ENCODE measurements at regions of chr17 and their contacts with region 1.

Region 1: GRCh38 chr17:48084932-48085444 is 16.3 kb downstream of the CBX1 start:
- DNase-seq: no peak
- CTCF ChIP-seq: no peak

Region 2: DNA sequence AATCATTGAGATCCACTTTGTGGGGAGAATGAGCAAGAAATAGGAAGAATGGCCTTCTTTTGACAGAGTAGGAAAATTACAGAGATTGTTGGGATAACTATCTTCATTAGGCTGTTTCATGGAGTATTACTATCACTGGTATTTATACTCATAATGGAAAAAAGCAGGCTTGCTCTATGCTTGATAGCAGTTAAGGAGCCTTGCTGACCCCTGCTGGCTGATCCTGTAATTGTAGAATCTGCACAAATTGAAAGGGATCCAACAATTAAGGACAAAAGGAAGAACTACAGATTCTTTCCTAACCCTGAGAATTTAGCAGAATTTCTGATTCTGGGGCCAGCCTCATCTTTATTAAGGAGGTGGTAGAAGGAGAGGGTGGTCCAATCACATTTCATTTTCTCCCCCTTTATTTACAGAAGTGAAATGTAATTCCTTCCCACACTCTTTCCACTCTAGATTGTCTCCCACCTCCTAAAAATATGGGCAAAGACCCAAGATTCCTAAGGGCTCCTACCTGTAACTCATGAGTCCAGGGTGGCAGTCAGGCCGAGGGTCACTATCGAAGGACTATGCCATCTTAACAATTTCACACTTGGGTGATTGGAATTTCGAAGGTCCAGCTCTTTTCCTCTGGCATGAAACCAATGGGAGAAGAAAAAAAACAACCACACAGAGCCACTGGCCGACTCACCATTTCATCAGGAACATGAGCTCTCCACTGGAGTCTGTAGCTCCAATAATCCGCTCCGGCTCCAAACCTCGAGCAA is 10.5 kb before region 1 on chr17:
- CTCF ChIA-PET with region 1: interaction called, 214 read pairs
- POLR2A ChIA-PET with region 1: no interaction called
- DNase-seq: peak; percentile 64
- CTCF ChIP-seq: peak; percentile 81

Region 3: DNA sequence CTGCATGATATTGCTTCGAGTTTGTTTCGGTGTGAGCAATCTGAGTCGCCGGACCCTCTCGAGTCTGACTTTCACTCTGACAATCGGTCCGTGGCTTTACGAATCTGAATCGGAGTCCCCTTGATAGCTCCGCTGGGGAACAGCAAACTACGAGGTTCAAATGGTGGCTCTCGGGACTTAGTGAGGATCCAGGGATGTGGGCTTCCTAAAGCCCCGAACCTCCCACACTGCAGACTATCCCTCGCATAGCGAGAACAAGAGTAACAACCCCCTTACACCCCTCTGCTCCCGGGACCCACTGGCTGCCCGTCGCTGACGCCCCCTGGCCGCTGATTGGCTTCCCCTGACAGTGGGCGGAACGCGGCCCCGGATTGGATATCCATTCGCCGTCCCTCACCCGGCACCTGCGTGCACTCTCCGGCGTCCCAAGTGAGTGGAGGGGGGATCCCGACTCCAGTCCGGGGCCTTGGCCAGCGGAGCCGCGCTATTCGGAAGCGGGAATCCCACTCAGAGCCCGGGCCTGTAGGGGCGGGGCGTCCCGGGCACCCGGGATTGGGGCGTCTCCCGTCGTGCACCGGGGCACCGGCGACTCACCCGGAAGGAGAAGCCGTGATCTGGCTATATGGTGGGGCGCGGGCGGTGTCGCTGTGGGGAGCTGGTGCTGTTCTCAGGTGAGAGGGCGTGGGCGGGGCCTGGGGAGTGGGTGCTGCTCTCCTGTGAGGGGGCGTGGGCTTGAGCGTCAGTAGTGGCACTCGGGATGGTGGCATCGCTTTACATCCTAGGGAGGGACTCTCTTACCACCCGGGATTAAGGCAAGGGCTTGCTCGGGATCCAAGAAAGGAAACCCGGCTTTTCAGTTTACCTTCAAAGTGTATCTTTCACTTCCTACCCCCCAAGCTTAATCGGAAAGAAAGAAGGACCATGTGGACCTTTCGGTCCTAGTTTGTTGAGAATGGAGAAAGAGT is 22.5 kb after region 1 on chr17 and contains the start of gene SNX11:
- CTCF ChIA-PET with region 1: interaction called, 27 read pairs
- POLR2A ChIA-PET with region 1: interaction called, 3 read pairs
- DNase-seq: peak; percentile 86
- CTCF ChIP-seq: peak; percentile 19

Region 4: GRCh38 chr17:48123111-48123510 is 38.1 kb after region 1 on chr17:
- CTCF ChIA-PET with region 1: interaction called, 60 read pairs
- POLR2A ChIA-PET with region 1: interaction called, 4 read pairs
- DNase-seq: no peak
- CTCF ChIP-seq: no peak

Region 5: GRCh38 chr17:48131216-48131824 is 46.3 kb after region 1 on chr17:
- CTCF ChIA-PET with region 1: interaction called, 60 read pairs
- POLR2A ChIA-PET with region 1: no interaction called
- DNase-seq: peak; percentile 76
- CTCF ChIP-seq: peak; percentile 73

Measured in GM10248 (cell line).